Psoas muscle (tissue), 8 donors: ENCODE measurements at regions of chr3 and their contacts with region 1.

Region 1: GRCh38 chr3:168847291-168847883 is 751.7 kb upstream of the GOLIM4 start:
- DNase-seq: no peak
- ATAC-seq: no peak
- H3K4me3 ChIP-seq: no peak overlapping the region
- H3K27ac ChIP-seq: no peak overlapping the region
- H3K4me1 ChIP-seq: no peaks in the 10 kb centered on the region
- H3K27me3 ChIP-seq: peaks cover 0 to 5% (median 0%) of the 10 kb centered on the region in 3 donors
- CTCF ChIP-seq: peak; percentile 59

Region 2: DNA sequence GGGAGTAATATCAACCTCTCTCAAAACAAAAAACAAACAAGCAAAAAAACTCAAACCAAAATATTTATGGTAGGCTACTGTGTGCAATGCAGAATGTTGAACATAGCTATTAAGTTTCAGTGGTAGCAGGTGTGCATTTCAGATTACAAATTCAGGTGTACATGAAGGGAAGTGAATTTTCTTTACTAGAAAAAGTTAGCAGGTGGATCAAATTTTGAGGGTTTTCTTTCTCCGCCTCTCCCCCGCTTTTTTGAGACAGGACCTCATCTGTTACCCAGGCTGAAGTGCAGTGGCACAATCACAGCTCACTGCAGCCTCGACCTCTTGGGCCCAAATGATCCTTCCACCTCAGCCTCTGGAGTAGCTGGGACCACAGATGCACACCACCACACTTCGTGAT is 641.9 kb before region 1 on chr3:
- intact Hi-C with region 1: loop called (anchors 2 to 5 kb)
- DNase-seq: no peak
- ATAC-seq: no peak
- H3K4me3 ChIP-seq: no peak overlapping the region
- H3K27ac ChIP-seq: no peak overlapping the region
- H3K4me1 ChIP-seq: no peaks in the 10 kb centered on the region
- H3K27me3 ChIP-seq: no peaks in the 10 kb centered on the region
- CTCF ChIP-seq: no peak

Region 3: DNA sequence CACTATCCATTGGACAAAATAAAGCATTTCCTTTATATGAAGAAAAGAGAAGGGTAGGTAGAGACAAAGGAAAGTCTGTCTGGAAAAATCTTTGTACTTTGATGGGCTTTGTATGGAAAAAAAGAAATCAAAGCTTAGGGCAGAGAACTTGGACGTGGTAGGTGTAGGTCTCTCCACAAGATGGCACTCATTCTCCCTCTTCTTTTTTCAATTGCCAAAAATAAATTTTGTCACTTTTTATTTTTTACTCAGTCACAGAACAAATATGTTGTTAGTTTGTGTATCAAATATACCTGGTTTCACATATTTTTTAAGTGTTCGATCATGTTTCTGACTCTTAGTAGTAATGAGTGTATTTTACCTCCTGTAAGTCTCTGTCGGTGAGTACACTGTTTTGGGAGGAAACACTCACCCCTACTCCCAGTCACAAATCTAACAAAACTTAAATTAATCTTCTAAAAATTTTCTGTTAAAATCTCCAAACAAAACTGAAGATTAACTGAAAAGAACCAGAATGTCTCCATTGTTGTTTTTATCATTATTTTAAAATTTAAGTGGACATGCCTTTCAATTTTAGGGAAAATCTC is 335.9 kb before region 1 on chr3:
- intact Hi-C with region 1: loop called in 1 of 2 experiments (anchors 5 kb)
- DNase-seq: no peak
- ATAC-seq: no peak
- H3K4me3 ChIP-seq: no peak overlapping the region
- H3K27ac ChIP-seq: no peak overlapping the region
- H3K4me1 ChIP-seq: no peaks in the 10 kb centered on the region
- H3K27me3 ChIP-seq: no peaks in the 10 kb centered on the region
- CTCF ChIP-seq: peak; percentile 23

Region 4: DNA sequence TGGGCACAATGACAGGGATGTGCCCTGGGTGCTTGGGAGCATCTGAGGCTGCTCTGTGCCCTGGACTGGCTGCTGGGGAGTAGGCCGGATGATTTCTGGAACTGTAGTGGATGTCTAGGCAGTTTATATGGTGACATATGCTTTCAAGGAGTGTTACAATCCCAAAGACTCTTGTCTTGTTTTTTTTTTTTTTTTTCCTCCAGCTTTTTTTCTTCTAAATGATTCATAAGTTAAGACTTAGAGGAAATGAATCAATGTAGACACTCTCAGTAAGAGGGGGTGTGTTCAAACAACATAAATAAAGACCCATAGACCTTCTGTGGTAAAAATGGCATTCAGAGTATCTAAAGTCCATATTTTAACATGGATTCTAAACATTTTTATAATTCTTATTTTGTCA is 45.6 kb before region 1 on chr3:
- intact Hi-C with region 1: no loop called
- DNase-seq: no peak
- ATAC-seq: no peak
- H3K4me3 ChIP-seq: no peak overlapping the region
- H3K27ac ChIP-seq: no peak overlapping the region
- H3K4me1 ChIP-seq: no peaks in the 10 kb centered on the region
- H3K27me3 ChIP-seq: no peaks in the 10 kb centered on the region
- CTCF ChIP-seq: no peak